Activated CD8-positive, alpha-beta memory T cell treated with anti-CD3 and anti-CD28 coated beads, Interleukin-2, amount 10 ng/mL, durations not matched to agents 7 days and 5 days (primary cell): ENCODE measurements at regions of chr13 and their contacts with region 1.

Region 1: GRCh38 chr13:27362064-27362883 is 62.1 kb upstream of the GTF3A start:
- DNase-seq: peak; percentile 89
- ATAC-seq: peak; percentile 96
- H3K4me3 Mint-ChIP-seq: peak overlapping the region; percentile 50
- H3K27ac Mint-ChIP-seq: no peak overlapping the region
- H3K4me1 Mint-ChIP-seq: peaks cover 9% of the 10 kb centered on the region
- H3K27me3 Mint-ChIP-seq: peaks cover 31% of the 10 kb centered on the region

Region 2: GRCh38 chr13:25744178-25744577 is 1618.1 kb before region 1 on chr13:
- CTCF ChIA-PET with region 1: no interaction called
- DNase-seq: no peak
- ATAC-seq: no peak
- H3K4me3 Mint-ChIP-seq: no peak overlapping the region
- H3K27ac Mint-ChIP-seq: no peak overlapping the region
- H3K4me1 Mint-ChIP-seq: no peaks in the 10 kb centered on the region
- H3K27me3 Mint-ChIP-seq: peaks cover 31% of the 10 kb centered on the region

Region 3: GRCh38 chr13:26971990-26972887 is 390.0 kb before region 1 on chr13:
- CTCF ChIA-PET with region 1: interaction called, 15 read pairs
- DNase-seq: peak; percentile 57
- ATAC-seq: peak; percentile 78
- H3K4me3 Mint-ChIP-seq: no peak overlapping the region
- H3K27ac Mint-ChIP-seq: no peak overlapping the region
- H3K4me1 Mint-ChIP-seq: peaks cover 5% of the 10 kb centered on the region
- H3K27me3 Mint-ChIP-seq: peaks cover 3% of the 10 kb centered on the region

Region 4: DNA sequence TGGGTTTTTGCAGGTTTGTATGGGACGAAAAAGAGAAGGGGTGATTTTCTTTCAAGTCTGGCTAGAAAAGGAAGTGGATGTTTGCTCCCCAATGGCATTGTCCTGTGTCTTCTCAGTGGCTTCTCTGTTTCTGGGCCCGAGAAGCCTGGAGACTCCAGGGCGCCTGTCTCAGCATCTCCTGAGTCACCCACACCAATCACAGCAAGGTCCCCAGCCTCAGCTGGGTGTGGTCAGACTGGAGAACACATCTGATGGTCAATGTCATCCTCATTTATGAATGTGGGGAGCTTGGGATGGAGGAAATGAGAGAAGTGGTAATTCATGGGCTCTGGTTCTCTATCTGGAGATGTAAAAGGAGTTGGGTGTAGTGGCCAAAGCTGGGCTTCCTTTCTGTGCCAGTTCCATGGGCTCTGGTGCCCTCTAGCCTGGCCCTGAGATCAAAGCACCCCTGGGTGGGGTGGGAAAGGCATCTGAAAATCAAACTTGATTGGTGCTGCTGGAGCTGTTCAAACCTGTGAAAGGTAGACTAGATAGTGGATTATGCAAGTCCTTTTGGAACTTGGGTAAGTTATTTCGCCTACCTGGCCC is 78.3 kb before region 1 on chr13:
- CTCF ChIA-PET with region 1: interaction called, 11 read pairs
- DNase-seq: peak; percentile 48
- ATAC-seq: peak; percentile 53
- H3K4me3 Mint-ChIP-seq: no peak overlapping the region
- H3K27ac Mint-ChIP-seq: no peak overlapping the region
- H3K4me1 Mint-ChIP-seq: no peaks in the 10 kb centered on the region
- H3K27me3 Mint-ChIP-seq: no peaks in the 10 kb centered on the region

Region 5: DNA sequence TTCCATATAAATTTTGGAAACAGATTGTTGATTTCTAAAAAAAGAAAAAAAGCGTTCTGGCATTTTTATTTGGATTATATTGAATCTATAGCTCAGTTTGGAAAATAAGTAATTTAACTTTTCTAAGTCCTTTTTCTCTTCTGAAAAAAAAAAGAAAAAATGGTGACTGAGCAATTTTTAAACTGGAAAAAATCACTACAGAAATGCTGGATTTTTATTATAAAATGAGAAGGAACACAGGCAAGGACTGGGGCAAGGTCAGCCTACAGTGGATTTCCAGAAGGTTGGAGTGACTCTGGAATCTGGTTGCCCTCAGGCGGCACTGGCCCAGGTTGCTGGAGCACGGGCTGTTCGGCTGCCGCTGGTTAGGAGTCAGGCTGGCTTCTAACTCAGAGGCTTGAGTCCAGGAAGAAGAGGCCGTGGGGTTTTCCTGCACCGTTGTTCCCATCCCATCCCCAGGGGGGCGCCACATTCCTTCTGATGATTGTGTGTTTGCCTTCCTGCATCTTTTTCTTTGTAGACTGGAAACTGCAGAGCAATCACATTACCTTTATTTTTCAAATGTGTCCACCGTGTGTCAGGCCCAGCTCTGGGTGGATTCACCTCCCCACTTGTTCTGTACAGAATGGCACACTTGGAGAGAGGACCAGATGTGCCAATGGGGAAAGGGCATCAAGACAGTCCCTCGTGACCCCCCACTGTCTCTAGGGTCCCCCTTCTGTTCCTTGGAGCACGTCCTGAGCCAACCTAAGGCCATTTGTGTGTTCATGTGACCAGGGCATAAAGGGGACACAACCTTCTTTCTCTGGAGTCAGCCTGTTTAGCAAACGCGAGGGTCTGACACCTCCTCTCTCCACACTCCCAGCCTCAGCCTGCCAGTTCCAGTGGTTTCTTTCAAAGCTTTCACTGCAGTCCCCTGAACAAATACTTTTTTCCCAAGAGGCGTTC is 17.7 kb after region 1 on chr13:
- CTCF ChIA-PET with region 1: interaction called, 63 read pairs
- DNase-seq: peak; percentile 72
- ATAC-seq: peak; percentile 65
- H3K4me3 Mint-ChIP-seq: no peak overlapping the region
- H3K27ac Mint-ChIP-seq: no peak overlapping the region
- H3K4me1 Mint-ChIP-seq: peaks cover 1% of the 10 kb centered on the region
- H3K27me3 Mint-ChIP-seq: peaks cover 12% of the 10 kb centered on the region

Region 6: GRCh38 chr13:27533155-27533643 is 170.9 kb after region 1 on chr13:
- CTCF ChIA-PET with region 1: interaction called, 10 read pairs
- DNase-seq: peak; percentile 58
- ATAC-seq: peak; percentile 65
- H3K4me3 Mint-ChIP-seq: no peak overlapping the region
- H3K27ac Mint-ChIP-seq: no peak overlapping the region
- H3K4me1 Mint-ChIP-seq: peaks cover 4% of the 10 kb centered on the region
- H3K27me3 Mint-ChIP-seq: peaks cover 6% of the 10 kb centered on the region